MCF 10A (cell line): ENCODE measurements at regions of chr5 and their contacts with region 1.

Region 1: DNA sequence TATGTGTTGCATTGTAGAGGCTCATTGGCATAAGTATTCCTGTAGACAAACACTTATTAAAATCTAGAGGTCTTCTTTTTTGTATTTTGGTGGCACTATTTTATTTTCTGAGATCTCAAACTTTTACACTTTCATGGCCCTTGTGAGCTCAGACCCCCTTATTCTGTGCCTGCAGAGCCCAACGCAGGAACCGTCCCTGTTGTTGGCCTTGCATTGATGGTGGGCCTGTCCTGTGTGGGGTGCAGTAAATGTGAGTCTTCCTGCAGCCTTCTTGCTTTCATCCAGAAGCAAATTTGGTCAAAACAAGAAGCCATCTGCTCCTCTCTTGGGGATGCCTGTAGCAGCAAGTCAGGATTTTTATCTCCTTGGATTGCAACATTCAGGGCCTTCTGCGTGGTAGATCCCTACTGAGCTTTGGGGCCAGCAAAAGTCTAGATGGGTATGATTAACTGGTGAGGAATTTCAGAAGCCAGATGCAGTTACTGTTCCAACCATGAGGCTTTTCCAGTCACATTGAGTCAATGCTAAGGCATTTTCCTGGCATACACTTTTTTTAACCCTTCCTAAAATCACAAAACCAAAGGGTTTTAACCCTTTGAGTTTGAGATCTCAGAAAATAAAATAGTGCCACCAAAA is 31.7 kb downstream of the BASP1 start:
- DNase-seq: peak; percentile 96
- H3K4me3 Mint-ChIP-seq: peak overlapping the region; percentile 54
- H3K27ac Mint-ChIP-seq: peak overlapping the region; percentile 92
- H3K4me1 Mint-ChIP-seq: peaks cover 38% of the 10 kb centered on the region
- H3K27me3 Mint-ChIP-seq: no peaks in the 10 kb centered on the region
- CTCF ChIP-seq: peak; percentile 19

Region 2: GRCh38 chr5:16489322-16489791 is 759.8 kb before region 1 on chr5:
- CTCF ChIA-PET with region 1: no interaction called
- POLR2A ChIA-PET with region 1: no interaction called
- intact Hi-C with region 1: no loop called
- DNase-seq: peak; percentile 48
- H3K4me3 Mint-ChIP-seq: no peak overlapping the region
- H3K27ac Mint-ChIP-seq: peak overlapping the region; percentile 29
- H3K4me1 Mint-ChIP-seq: peaks cover 16% of the 10 kb centered on the region
- H3K27me3 Mint-ChIP-seq: no peaks in the 10 kb centered on the region
- CTCF ChIP-seq: peak; percentile 68

Region 3: DNA sequence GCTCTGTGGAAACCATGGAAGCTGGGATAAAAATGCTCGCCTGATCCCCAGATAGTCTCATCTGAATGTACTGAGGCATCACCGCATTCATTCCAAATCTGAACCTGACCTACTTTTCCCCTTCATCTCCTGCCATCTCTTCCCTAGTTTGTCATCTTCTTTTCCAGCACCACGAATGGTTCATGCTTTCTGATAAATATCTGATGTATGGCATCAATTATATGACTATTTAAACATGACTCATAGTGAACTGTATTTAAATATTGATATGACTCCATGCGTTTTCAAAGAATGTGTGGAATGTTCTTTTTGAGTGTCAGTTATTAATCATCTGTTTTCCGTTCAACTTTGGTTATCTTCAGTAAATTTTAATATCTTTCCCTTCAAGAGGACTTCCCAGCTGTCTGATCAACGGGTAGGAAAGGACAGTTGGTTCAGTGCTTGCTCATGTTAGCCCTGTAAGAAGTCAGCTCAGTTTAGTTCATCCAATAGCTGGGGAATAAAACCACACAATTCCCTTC is 10.5 kb before region 1 on chr5:
- CTCF ChIA-PET with region 1: interaction called, 3 read pairs
- POLR2A ChIA-PET with region 1: interaction called, 17 read pairs
- intact Hi-C with region 1: no loop called
- DNase-seq: no peak
- H3K4me3 Mint-ChIP-seq: no peak overlapping the region
- H3K27ac Mint-ChIP-seq: peak overlapping the region; percentile 46
- H3K4me1 Mint-ChIP-seq: peaks cover 31% of the 10 kb centered on the region
- H3K27me3 Mint-ChIP-seq: no peaks in the 10 kb centered on the region
- CTCF ChIP-seq: no peak

Region 4: GRCh38 chr5:17326600-17327037 is 77.5 kb after region 1 on chr5:
- CTCF ChIA-PET with region 1: no interaction called
- POLR2A ChIA-PET with region 1: no interaction called
- intact Hi-C with region 1: no loop called
- DNase-seq: no peak
- H3K4me3 Mint-ChIP-seq: no peak overlapping the region
- H3K27ac Mint-ChIP-seq: no peak overlapping the region
- H3K4me1 Mint-ChIP-seq: no peaks in the 10 kb centered on the region
- H3K27me3 Mint-ChIP-seq: no peaks in the 10 kb centered on the region
- CTCF ChIP-seq: no peak